AG04449 (cell line): ENCODE measurements at regions of chr6 and their contacts with region 1.

Region 1: GRCh38 chr6:39865011-39865888 is 69.0 kb downstream of the MOCS1 start:
- DNase-seq: no peak
- H3K4me3 ChIP-seq: no peak overlapping the region
- CTCF ChIP-seq: peak; percentile 80

Region 2: GRCh38 chr6:39812853-39813533 is 52.3 kb before region 1 on chr6:
- CTCF ChIA-PET with region 1: interaction called, 19 read pairs
- POLR2A ChIA-PET with region 1: no interaction called
- DNase-seq: peak; percentile 70
- H3K4me3 ChIP-seq: no peak overlapping the region
- CTCF ChIP-seq: peak; percentile 48

Region 3: GRCh38 chr6:39835821-39836295 is 29.4 kb before region 1 on chr6:
- CTCF ChIA-PET with region 1: interaction called, 14 read pairs
- POLR2A ChIA-PET with region 1: no interaction called
- DNase-seq: peak; percentile 64
- H3K4me3 ChIP-seq: no peak overlapping the region
- CTCF ChIP-seq: no peak

Region 4: DNA sequence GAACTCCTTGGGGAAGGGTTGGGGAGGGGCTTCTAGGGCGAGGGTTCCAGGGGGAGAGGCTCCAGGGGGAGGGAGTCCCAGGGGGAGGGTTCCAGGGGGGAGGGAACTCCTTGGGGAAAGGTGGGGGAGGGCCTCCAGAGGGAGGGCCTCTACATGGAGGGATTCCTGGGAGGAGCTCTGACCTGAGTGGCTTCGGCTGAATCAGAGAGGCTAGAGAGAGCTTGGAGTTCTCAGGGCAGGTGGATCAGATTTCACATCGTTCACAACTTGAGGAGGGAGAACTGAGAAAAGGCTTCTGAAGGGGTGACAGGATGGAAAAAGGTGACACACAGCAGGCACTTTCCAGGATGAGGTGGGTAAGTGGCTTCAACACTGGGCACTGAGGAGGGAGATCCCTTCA is 24.0 kb before region 1 on chr6:
- CTCF ChIA-PET with region 1: interaction called, 14 read pairs
- POLR2A ChIA-PET with region 1: no interaction called
- DNase-seq: no peak
- H3K4me3 ChIP-seq: no peak overlapping the region
- CTCF ChIP-seq: no peak

Region 5: DNA sequence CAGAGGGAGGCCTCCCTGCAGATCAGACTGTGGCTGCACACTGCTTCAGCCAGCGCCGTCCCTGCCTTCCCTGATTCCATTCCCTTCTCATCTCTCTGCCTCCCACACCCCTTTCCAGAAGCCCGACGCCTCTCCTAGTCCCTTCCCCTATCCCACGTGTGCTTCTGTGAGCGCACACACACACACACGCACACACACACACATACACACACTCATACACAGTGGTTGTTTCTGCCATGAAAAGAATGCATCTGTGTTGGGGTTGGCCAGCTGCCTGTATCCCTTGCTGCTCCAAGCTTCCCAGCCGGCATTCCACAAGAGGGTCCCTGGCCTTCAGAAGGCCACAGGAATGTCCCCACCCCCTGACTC is 17.3 kb after region 1 on chr6:
- CTCF ChIA-PET with region 1: interaction called, 180 read pairs
- POLR2A ChIA-PET with region 1: no interaction called
- DNase-seq: peak; percentile 99
- H3K4me3 ChIP-seq: peak overlapping the region; percentile 42
- CTCF ChIP-seq: no peak

Region 6: GRCh38 chr6:39892490-39893129 is 27.4 kb after region 1 on chr6:
- CTCF ChIA-PET with region 1: interaction called, 180 read pairs
- POLR2A ChIA-PET with region 1: no interaction called
- DNase-seq: peak; percentile 10
- H3K4me3 ChIP-seq: no peak overlapping the region
- CTCF ChIP-seq: peak; percentile 89